Psoas muscle (tissue), 8 donors: ENCODE measurements at regions of chr1 and their contacts with region 1.

Region 1: GRCh38 chr1:1835546-1835945 is 55.3 kb downstream of the GNB1 start:
- DNase-seq: no peak
- ATAC-seq: no peak
- H3K4me3 ChIP-seq: no peak overlapping the region
- H3K27ac ChIP-seq: no peak overlapping the region
- H3K4me1 ChIP-seq: peaks cover 6% of the 10 kb centered on the region
- H3K27me3 ChIP-seq: no peaks in the 10 kb centered on the region
- CTCF ChIP-seq: no peak

Region 2: GRCh38 chr1:1796466-1796865 is 39.1 kb before region 1 on chr1:
- intact Hi-C with region 1: loop called in 1 of 2 experiments (anchors 5 kb)
- DNase-seq: no peak
- ATAC-seq: no peak
- H3K4me3 ChIP-seq: no peak overlapping the region
- H3K27ac ChIP-seq: no peak overlapping the region
- H3K4me1 ChIP-seq: peaks cover 16% of the 10 kb centered on the region
- H3K27me3 ChIP-seq: no peaks in the 10 kb centered on the region
- CTCF ChIP-seq: peak; percentile 6